Activated CD4-positive, alpha-beta memory T cell treated with anti-CD3 and anti-CD28 coated beads for 36 hours (primary cell): ENCODE measurements at regions of chr4 and their contacts with region 1.

Region 1: DNA sequence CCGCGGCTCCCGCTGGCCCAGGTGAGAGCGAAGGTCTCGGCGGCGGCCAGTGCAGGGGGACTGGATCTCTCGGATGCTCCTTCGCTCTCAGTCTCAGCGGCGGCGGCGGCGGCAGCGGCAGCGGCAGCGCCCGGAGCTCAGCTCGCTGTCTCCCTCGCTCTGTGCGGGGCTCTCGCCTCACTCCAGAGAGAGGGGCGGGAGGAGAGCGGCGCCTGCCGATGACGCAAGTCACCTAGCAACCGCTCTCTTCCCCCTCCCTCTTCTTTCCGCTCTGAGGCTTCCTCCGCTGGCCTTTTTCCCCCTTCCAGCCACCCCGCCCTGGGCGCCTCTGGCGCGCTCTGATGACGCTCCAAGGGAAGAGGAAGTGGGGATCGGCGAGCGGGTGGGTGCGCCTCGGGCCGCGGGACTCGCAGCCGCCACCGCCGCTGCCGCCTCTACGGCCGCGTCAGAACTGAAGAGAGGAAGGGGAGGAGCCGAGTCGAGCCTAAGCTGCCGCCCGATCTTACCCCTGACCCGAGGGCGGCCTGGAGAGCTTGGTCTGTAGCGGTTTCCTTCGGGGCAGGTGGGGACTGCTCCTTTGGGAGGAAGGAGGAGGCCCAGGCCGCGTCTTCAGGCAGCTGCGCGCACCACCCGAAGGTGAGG is at the start of gene FBXW7:
- DNase-seq: peak; percentile 100
- H3K4me3 Mint-ChIP-seq: peak within 1 kb of the TSS; percentile 95
- H3K27ac Mint-ChIP-seq: peak within 1 kb of the TSS; percentile 99
- H3K4me1 Mint-ChIP-seq: peaks cover 57% of the 10 kb centered on the region
- H3K27me3 Mint-ChIP-seq: no peaks in the 10 kb centered on the region
- total RNA-seq, gene FBXW7: 35.8 to 37.8 TPM

Region 2: GRCh38 chr4:151760712-151761527 is 775.1 kb before region 1 on chr4 and contains the start of gene GATB:
- CTCF ChIA-PET with region 1: no interaction called
- POLR2A ChIA-PET with region 1: no interaction called
- intact Hi-C with region 1: loop called (anchors 1 kb)
- DNase-seq: peak; percentile 95
- H3K4me3 Mint-ChIP-seq: peak within 1 kb of the TSS; percentile 91
- H3K27ac Mint-ChIP-seq: peak within 1 kb of the TSS; percentile 64
- H3K4me1 Mint-ChIP-seq: peaks cover 13% of the 10 kb centered on the region
- H3K27me3 Mint-ChIP-seq: no peaks in the 10 kb centered on the region
- total RNA-seq, gene GATB: 16.1 to 16.5 TPM

Region 3: GRCh38 chr4:152265149-152265621 is 270.8 kb before region 1 on chr4:
- CTCF ChIA-PET with region 1: no interaction called
- POLR2A ChIA-PET with region 1: no interaction called
- intact Hi-C with region 1: no loop called
- DNase-seq: no peak
- H3K4me3 Mint-ChIP-seq: no peak overlapping the region
- H3K27ac Mint-ChIP-seq: no peak overlapping the region
- H3K4me1 Mint-ChIP-seq: peaks cover 3% of the 10 kb centered on the region
- H3K27me3 Mint-ChIP-seq: no peaks in the 10 kb centered on the region

Region 4: GRCh38 chr4:152398060-152398459 is 138.0 kb before region 1 on chr4:
- CTCF ChIA-PET with region 1: no interaction called
- POLR2A ChIA-PET with region 1: no interaction called
- intact Hi-C with region 1: no loop called
- DNase-seq: no peak
- H3K4me3 Mint-ChIP-seq: no peak overlapping the region
- H3K27ac Mint-ChIP-seq: no peak overlapping the region
- H3K4me1 Mint-ChIP-seq: peaks cover 44% of the 10 kb centered on the region
- H3K27me3 Mint-ChIP-seq: no peaks in the 10 kb centered on the region

Region 5: DNA sequence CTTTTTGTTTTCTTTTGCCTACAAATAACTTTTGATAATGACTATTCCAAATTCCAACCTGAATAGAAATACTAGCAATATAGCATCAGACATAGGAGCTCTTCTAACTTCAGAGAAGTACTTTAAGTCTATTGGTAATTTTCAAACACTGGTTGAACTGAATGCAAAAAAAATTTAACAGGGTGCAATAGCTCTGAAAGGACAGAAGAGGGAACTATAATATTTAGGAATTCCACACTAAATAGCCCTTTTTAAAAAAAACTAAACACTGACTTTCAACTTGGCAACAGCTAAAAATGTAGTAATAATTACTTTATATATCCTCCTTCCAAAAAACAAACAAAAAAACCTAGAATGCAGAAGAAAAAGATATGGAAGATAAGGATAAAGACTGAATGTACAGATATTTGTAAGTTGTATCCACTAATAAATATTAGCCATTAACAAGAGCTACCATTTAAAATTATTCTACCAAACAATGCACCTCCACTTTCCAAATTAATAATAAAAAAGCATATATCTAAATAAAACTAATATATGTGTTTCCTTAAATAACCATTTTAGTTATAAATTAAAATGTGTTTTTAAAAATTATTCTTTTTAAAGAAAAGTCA is 81.5 kb before region 1 on chr4:
- CTCF ChIA-PET with region 1: interaction called, 3 read pairs
- POLR2A ChIA-PET with region 1: interaction called, 3 read pairs
- intact Hi-C with region 1: loop called (anchors 2 kb)
- DNase-seq: no peak
- H3K4me3 Mint-ChIP-seq: no peak overlapping the region
- H3K27ac Mint-ChIP-seq: no peak overlapping the region
- H3K4me1 Mint-ChIP-seq: peaks cover 33% of the 10 kb centered on the region
- H3K27me3 Mint-ChIP-seq: no peaks in the 10 kb centered on the region

Region 6: DNA sequence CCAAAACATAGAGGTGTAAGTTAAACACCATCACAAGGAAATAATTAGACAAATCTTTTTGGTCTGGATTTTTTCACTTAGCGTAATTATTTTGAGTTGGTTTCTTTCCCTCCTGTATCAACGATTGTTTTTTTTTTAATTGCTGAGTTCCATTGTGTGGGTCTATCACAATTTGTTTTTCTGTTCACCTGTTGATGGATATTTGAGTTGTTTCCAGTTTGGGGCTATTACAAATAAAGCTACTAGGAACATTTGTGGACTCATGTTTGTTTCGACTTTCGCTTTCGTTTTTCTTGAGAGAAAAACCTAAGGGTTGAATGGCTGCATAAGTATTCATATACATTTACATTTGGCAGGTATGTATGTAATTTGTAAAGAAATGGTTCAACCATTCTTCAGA is 20.3 kb after region 1 on chr4:
- CTCF ChIA-PET with region 1: interaction called, 8 read pairs
- POLR2A ChIA-PET with region 1: interaction called, 81 read pairs
- intact Hi-C with region 1: loop called (anchors 1 kb)
- DNase-seq: no peak
- H3K4me3 Mint-ChIP-seq: peak overlapping the region; percentile 57
- H3K27ac Mint-ChIP-seq: peak overlapping the region; percentile 77
- H3K4me1 Mint-ChIP-seq: peaks cover 54% of the 10 kb centered on the region
- H3K27me3 Mint-ChIP-seq: no peaks in the 10 kb centered on the region

Region 7: DNA sequence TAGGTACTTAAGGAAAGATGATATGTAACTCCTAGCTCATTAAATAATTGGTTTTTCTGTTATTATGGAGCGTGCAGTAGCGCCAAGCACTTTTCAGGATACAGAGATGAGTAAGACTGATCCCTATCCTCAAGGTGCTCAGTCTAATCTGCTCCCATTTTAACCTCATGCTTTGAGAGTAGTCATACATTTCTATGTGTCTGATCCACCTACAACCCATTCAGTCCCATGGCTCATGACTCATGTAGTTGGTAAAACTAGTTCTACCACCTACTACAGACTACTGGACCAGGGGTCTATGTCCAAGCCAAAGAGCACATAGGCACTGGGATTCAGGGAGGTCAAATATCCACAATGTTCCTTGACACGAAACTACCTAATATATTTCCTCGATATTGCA is 82.9 kb after region 1 on chr4:
- CTCF ChIA-PET with region 1: no interaction called
- POLR2A ChIA-PET with region 1: no interaction called
- intact Hi-C with region 1: no loop called
- DNase-seq: no peak
- H3K4me3 Mint-ChIP-seq: no peak overlapping the region
- H3K27ac Mint-ChIP-seq: no peak overlapping the region
- H3K4me1 Mint-ChIP-seq: no peaks in the 10 kb centered on the region
- H3K27me3 Mint-ChIP-seq: no peaks in the 10 kb centered on the region

Region 8: DNA sequence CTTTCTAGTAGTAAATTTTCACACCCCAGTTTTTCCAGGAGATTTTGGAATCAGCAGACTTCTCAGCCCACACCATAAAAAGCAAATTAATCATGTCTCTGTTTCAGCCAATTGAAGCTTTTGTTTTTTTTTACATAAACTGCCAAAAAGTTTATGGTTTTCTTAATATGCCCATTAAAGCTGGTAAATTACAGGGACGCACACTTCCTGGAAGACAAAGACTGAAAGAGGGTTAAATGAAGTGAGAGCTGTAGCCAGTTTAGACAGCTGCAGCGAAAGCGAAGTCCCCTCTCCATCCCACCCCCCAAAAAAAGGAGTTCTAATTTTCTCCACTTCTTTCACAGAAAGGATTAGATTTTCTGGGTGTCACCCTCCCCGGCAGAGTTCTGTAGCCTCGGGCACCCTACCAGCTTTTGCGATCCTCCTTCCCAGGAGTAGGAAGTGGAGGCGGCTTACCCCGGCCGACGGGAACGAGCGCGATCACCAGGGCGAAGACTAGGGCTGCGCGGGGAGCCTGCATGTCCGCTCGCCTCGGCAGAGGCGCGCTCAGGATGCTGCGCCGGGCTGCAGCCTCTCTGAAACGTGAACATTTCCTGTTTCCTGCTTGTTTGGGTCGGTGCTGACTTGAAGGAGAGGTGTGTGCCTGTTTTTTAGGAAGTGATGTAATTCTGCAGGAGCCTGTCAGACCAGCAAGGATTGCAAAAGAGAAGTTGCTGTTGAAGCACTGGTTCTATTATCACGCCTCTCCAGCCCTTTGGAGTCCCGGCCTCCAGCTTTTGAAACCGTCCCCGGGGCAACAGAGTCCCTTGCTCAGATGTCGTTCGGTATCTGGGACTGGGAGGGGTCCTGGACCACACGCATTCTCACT is 143.6 kb after region 1 on chr4 and contains the start of gene TMEM154:
- CTCF ChIA-PET with region 1: no interaction called
- POLR2A ChIA-PET with region 1: interaction called, 11 read pairs
- intact Hi-C with region 1: loop called (anchors 1 kb)
- DNase-seq: peak; percentile 82
- H3K4me3 Mint-ChIP-seq: peak within 1 kb of the TSS; percentile 91
- H3K27ac Mint-ChIP-seq: peak within 1 kb of the TSS; percentile 84
- H3K4me1 Mint-ChIP-seq: peaks cover 58% of the 10 kb centered on the region
- H3K27me3 Mint-ChIP-seq: no peaks in the 10 kb centered on the region
- total RNA-seq, gene TMEM154: 18.1 to 20.8 TPM

Region 9: DNA sequence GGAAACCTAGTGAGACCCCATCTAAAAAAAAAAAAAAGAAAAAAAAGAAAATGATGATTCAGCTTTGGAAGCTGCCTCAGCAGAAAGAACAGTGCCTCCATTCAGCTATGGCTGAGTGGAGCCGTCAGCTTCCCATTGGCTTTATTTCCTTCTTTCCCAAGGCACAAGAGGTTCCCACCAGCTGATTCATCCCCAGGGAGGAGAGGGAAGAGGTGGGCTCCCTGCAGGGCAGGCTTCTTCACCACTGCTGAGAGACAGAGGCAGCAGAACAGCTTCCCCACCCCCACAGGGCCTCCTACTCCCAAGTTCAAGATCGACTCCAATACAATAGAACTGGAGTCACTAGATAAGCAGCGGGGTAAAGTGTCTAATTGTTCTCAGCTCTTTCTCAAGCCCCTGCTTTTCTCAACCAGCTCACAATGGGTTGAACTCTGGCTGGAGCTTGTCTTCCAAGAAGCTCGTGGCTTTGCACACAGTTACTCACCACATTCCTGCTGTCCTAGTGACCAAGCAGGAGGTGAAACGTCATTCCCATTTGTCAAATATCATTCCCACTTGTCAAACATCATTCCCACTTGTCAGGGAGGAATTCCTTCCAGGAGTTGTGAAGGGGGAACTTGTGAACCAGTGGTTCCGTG is 447.9 kb after region 1 on chr4:
- CTCF ChIA-PET with region 1: no interaction called
- POLR2A ChIA-PET with region 1: no interaction called
- intact Hi-C with region 1: no loop called
- DNase-seq: no peak
- H3K4me3 Mint-ChIP-seq: no peak overlapping the region
- H3K27ac Mint-ChIP-seq: no peak overlapping the region
- H3K4me1 Mint-ChIP-seq: no peaks in the 10 kb centered on the region
- H3K27me3 Mint-ChIP-seq: peaks cover 2% of the 10 kb centered on the region

Region 10: DNA sequence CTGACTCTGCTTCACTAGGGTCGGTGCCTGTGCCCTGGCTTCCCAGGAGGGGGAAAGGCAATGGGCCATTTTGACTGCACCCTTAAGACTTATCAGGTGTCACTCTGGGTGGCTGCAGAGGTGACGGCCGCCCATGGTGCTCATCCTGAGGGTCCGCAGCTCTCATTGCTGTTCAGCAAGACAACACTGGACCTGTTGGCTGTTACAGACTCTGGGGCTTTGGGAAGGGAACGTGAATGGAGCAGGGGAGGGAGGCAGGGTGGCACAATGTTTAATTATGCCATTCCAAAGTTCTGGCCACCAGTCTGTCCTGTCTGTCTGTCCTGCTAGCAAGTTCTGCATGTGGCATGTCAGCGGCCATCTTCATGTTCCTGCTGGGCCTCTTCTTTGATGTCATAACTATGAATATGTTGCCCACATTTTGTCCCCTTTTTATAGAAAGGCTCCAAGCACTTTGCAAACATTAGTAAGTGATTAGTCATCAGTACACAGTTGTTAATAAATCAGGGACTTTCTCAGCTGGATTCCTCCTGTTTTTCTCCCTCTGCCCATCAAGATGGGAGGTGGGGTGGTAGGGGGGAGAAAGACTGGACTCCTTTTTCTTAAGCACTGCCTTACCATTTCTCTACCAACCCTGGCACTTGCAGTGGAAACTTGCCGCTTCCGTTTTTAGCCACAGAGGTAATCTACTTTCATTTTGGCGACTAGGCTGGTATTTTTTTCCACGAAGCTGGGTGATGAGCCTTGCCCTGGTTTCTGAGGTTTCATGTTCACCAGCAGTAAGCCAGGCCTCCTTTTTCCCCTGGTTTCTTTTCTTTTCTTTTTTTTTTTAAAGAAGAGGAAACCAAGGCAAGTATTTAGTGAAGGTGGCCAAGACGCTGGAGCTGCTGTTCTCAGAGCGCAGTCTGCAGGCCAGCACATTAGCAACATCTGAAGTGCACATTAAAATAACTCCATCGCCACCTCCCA is 579.6 kb after region 1 on chr4:
- CTCF ChIA-PET with region 1: no interaction called
- POLR2A ChIA-PET with region 1: no interaction called
- intact Hi-C with region 1: loop called (anchors 10 kb)
- DNase-seq: peak; percentile 89
- H3K4me3 Mint-ChIP-seq: no peak overlapping the region
- H3K27ac Mint-ChIP-seq: no peak overlapping the region
- H3K4me1 Mint-ChIP-seq: peaks cover 17% of the 10 kb centered on the region
- H3K27me3 Mint-ChIP-seq: no peaks in the 10 kb centered on the region